ENCODE measurements at regions of chr4 and their contacts with region 1.

Region 1: GRCh38 chr4:82373816-82374625 is at the start of gene HNRNPD:
- DNase-seq: peak; percentile 98
- ATAC-seq: peak; percentile 99
- total RNA-seq, gene HNRNPD: 160 TPM

Region 2: DNA sequence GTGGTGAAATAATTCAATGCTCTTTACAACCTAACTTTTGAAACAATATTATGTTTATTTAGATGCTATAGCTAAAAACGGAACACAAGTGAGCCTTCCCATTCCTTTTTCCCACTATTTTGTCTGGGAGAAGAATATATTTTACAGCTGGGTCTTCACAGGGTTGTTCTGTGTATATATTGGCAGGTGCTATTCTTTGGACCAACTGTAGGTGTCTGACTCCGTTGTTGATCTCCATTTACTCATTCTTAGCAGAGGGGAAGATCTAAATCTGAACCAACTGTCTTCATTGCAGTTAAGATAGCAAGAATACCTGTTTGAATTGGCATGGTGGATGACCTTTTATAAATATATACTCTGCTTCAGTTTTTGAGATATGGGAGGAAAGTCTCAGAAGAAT is 1781.1 kb before region 1 on chr4:
- intact Hi-C with region 1: no loop called
- DNase-seq: no peak
- ATAC-seq: no peak

Region 3: GRCh38 chr4:82428969-82429727 is 55.1 kb after region 1 on chr4:
- intact Hi-C with region 1: loop called (anchors 10 kb)
- DNase-seq: peak; percentile 96
- ATAC-seq: peak; percentile 90

Measured in sciatic nerve (tissue), 2 donors.